ENCODE measurements at regions of chr18 and their contacts with region 1.

Region 1: DNA sequence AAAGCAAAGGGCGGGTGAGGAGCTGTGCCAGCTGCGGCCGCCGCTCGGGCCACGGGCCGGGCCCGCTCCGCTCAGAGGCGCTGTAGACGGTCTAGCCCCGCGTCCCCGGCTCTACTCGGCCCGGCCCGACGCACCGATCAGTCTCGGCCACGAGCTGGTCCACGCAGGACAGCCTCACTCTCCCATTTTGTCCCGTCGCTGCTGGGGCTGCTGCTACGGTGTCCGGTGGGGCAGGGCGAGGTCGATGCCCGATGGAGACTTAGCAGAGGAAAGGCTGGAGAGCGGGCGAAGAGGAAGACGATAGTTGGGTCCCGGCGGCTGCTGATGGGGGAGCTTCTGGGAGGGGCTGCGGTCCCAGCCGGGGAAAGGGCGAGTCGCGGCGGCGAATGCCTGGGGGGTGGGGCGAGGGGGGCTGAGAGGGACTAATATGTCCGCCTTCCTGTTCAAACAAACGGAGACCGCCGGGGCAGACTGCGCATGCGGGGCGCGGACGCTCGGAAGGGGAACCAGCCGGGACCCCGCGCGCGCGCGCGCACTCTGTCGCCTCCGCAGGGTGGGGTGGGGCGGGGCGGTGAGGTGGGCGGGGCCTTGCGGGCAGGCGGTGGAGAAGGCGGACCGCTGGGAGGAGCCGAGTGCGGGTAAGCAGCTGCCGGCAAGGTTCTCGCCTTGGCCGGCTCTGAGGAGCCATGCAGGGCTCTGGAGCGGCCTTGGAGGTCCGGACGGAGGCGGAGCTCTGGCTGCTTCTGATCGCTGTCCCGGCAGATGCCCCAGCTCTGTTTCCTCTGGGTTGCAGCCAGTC is at the start of gene ROCK1:
- DNase-seq: peak; percentile 95 to 99 (median 97)
- H3K4me3 ChIP-seq: peak within 1 kb of the TSS; percentile 90 to 96
- H3K4me3 Mint-ChIP-seq: peak within 1 kb of the TSS in 1 of 8 donors; percentile 97
- H3K27ac ChIP-seq: peak within 1 kb of the TSS; percentile 95
- H3K27ac Mint-ChIP-seq: peak within 1 kb of the TSS; percentile 88 to 96 (median 93)
- H3K4me1 ChIP-seq: peaks cover 41% of the 10 kb centered on the region
- H3K4me1 Mint-ChIP-seq: peaks cover 7 to 14% (median 11%) of the 10 kb centered on the region in 4 donors
- H3K27me3 ChIP-seq: no peaks in the 10 kb centered on the region
- H3K27me3 Mint-ChIP-seq: no peaks in the 10 kb centered on the region
- total RNA-seq, gene ROCK1: 80.7 to 82.8 TPM

Region 2: DNA sequence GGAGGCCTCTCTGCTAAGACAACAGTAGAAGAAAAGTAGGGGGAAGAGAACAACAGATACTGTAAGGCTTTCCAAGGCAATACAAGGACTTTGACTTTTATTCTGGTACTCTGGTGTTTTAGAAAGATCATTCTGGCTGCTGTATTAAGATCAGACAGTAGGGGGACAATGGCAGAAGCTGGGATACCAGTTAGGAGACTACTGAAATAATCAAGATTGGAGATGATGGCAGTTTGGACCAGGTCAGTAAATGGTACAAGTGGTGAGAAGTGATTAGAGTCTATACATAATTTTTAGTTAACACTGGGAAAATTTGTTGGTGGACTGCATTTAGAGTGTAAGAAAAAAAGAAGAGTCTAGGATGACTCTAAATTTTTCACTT is 139.7 kb before region 1 on chr18:
- CTCF ChIA-PET with region 1: interaction called, 3 read pairs
- POLR2A ChIA-PET with region 1: no interaction called
- intact Hi-C with region 1: loop called (anchors 5 kb)
- DNase-seq: peak in 3 of 5 donors; percentile 7 to 15 (median 14)
- H3K4me3 ChIP-seq: no peak overlapping the region
- H3K4me3 Mint-ChIP-seq: no peak overlapping the region
- H3K27ac ChIP-seq: no peak overlapping the region
- H3K27ac Mint-ChIP-seq: peak overlapping the region in 1 of 7 donors; percentile 19
- H3K4me1 ChIP-seq: no peaks in the 10 kb centered on the region
- H3K4me1 Mint-ChIP-seq: peaks cover 0 to 7% (median 2%) of the 10 kb centered on the region in 4 donors
- H3K27me3 ChIP-seq: no peaks in the 10 kb centered on the region
- H3K27me3 Mint-ChIP-seq: no peaks in the 10 kb centered on the region

Region 3: DNA sequence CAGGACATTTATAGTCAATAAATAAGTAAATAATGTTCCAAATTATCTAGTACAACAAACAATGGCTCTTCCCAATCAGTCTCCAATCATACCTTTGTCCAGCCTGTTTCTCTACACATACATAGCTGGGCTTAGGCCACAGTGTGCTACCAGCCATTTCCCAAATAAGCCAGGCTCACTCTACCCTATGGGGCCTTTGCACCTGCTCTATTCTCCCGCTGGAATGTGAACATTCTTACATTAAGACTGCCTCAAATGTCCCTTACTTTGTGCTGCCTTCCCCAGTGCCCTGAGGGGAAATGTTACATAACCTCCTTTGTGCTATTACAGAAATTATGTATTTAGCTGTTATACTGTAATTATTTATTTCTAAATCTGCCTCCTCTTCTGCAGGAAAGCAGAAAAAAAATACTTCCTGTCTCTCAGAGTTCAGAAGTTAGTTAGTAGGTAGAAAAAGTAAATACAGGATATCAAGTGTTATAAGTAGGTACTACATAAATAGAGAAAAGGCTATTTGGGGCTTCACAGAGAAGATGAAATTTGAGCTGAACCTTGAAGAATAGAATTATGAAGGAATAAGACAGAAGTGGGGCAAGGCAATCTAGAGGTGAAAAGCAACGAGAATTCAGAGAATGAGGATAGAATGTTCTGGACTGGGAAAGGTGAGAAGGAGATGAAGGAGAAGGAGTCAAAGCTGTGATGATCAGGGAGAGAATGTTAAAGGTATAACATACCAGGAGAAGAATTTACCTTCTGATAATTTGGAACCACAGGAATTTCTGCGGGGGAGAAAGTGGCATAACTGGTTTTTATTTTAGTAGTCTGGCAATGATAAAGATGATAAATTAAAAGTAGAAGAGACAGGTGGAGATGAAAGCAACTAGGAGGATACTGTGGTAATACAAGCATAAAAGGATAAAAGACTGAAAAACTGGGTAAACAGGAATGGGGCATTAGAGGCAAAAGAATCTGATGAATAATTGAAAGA is 36.9 kb before region 1 on chr18:
- CTCF ChIA-PET with region 1: no interaction called
- POLR2A ChIA-PET with region 1: interaction called, 8 read pairs
- intact Hi-C with region 1: loop called (anchors 2 kb)
- DNase-seq: peak in 1 of 5 donors; percentile 13
- H3K4me3 ChIP-seq: no peak overlapping the region
- H3K4me3 Mint-ChIP-seq: peak overlapping the region; percentile 39 to 82 (median 64)
- H3K27ac ChIP-seq: no peak overlapping the region
- H3K27ac Mint-ChIP-seq: peak overlapping the region; percentile 5 to 89 (median 62)
- H3K4me1 ChIP-seq: peaks cover 76% of the 10 kb centered on the region
- H3K4me1 Mint-ChIP-seq: peaks cover 58 to 81% (median 72%) of the 10 kb centered on the region in 4 donors
- H3K27me3 ChIP-seq: no peaks in the 10 kb centered on the region
- H3K27me3 Mint-ChIP-seq: no peaks in the 10 kb centered on the region

Region 4: GRCh38 chr18:21123290-21123926 is 11.9 kb after region 1 on chr18:
- CTCF ChIA-PET with region 1: no interaction called
- POLR2A ChIA-PET with region 1: interaction called, 12 read pairs
- intact Hi-C with region 1: no loop called
- DNase-seq: peak in 2 of 5 donors; percentile 7 to 10
- H3K4me3 ChIP-seq: no peak overlapping the region
- H3K4me3 Mint-ChIP-seq: peak overlapping the region in 6 of 8 donors; percentile 0 to 58 (median 32)
- H3K27ac ChIP-seq: no peak overlapping the region
- H3K27ac Mint-ChIP-seq: peak overlapping the region in 5 of 7 donors; percentile 19 to 48 (median 37)
- H3K4me1 ChIP-seq: peaks cover 6% of the 10 kb centered on the region
- H3K4me1 Mint-ChIP-seq: peaks cover 4 to 7% (median 6%) of the 10 kb centered on the region in 4 donors
- H3K27me3 ChIP-seq: no peaks in the 10 kb centered on the region
- H3K27me3 Mint-ChIP-seq: peaks cover under 1 to 2% of the 10 kb centered on the region in 2 donors

Region 5: DNA sequence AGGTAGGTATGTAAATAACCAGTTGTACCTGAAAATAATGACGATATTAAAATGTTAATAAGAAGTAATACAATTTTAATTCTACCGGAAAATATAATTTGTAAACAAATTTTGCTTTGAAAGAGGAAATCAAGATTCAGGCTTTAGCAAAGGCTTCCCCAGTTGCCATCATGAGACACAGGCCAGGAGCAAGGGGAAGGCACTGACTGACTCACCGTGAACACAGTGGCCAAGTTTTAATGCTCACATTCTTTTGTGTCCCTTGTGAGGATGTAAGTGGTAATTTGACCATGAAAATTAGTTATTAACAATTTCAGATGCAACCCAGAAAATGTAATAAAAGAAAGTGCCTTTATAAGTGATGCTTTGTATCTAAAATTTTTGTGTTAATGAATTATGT is 294.6 kb after region 1 on chr18:
- CTCF ChIA-PET with region 1: no interaction called
- POLR2A ChIA-PET with region 1: no interaction called
- intact Hi-C with region 1: no loop called
- DNase-seq: no peak
- H3K4me3 ChIP-seq: no peak overlapping the region
- H3K4me3 Mint-ChIP-seq: no peak overlapping the region
- H3K27ac ChIP-seq: no peak overlapping the region
- H3K27ac Mint-ChIP-seq: no peak overlapping the region
- H3K4me1 ChIP-seq: no peaks in the 10 kb centered on the region
- H3K4me1 Mint-ChIP-seq: no peaks in the 10 kb centered on the region
- H3K27me3 ChIP-seq: no peaks in the 10 kb centered on the region
- H3K27me3 Mint-ChIP-seq: peaks cover 0 to 4% of the 10 kb centered on the region in 2 donors

Region 6: GRCh38 chr18:21600526-21601410 is 489.2 kb after region 1 on chr18 and contains the start of gene ESCO1:
- CTCF ChIA-PET with region 1: no interaction called
- POLR2A ChIA-PET with region 1: interaction called, 18 read pairs
- intact Hi-C with region 1: loop called (anchors 1 kb)
- DNase-seq: peak; percentile 96 to 98 (median 98)
- H3K4me3 ChIP-seq: peak within 1 kb of the TSS; percentile 90 to 98
- H3K4me3 Mint-ChIP-seq: peak within 1 kb of the TSS; percentile 93 to 99 (median 96)
- H3K27ac ChIP-seq: peak within 1 kb of the TSS; percentile 93
- H3K27ac Mint-ChIP-seq: peak within 1 kb of the TSS; percentile 98 to 100 (median 99)
- H3K4me1 ChIP-seq: peaks cover 35% of the 10 kb centered on the region
- H3K4me1 Mint-ChIP-seq: peaks cover 23 to 62% (median 29%) of the 10 kb centered on the region in 4 donors
- H3K27me3 ChIP-seq: no peaks in the 10 kb centered on the region
- H3K27me3 Mint-ChIP-seq: no peaks in the 10 kb centered on the region
- total RNA-seq, gene ESCO1: 32.3 to 38.2 TPM

Region 7: GRCh38 chr18:21629089-21629832 is 517.7 kb after region 1 on chr18:
- CTCF ChIA-PET with region 1: no interaction called
- POLR2A ChIA-PET with region 1: no interaction called
- intact Hi-C with region 1: no loop called
- DNase-seq: no peak
- H3K4me3 ChIP-seq: no peak overlapping the region
- H3K4me3 Mint-ChIP-seq: peak overlapping the region in 6 of 8 donors; percentile 14 to 50 (median 42)
- H3K27ac ChIP-seq: no peak overlapping the region
- H3K27ac Mint-ChIP-seq: peak overlapping the region; percentile 53 to 94 (median 77)
- H3K4me1 ChIP-seq: peaks cover 16% of the 10 kb centered on the region
- H3K4me1 Mint-ChIP-seq: peaks cover 9 to 19% (median 15%) of the 10 kb centered on the region in 4 donors
- H3K27me3 ChIP-seq: no peaks in the 10 kb centered on the region
- H3K27me3 Mint-ChIP-seq: no peaks in the 10 kb centered on the region

Region 8: GRCh38 chr18:21740724-21741510 is 629.4 kb after region 1 on chr18 and contains the start of gene MIB1:
- CTCF ChIA-PET with region 1: no interaction called
- POLR2A ChIA-PET with region 1: no interaction called
- intact Hi-C with region 1: loop called (anchors 2 kb)
- DNase-seq: peak in 2 of 5 donors; percentile 98 to 99
- H3K4me3 ChIP-seq: peak within 1 kb of the TSS in 1 of 2 donors; percentile 100
- H3K4me3 Mint-ChIP-seq: peak within 1 kb of the TSS; percentile 94 to 98 (median 95)
- H3K27ac ChIP-seq: peak within 1 kb of the TSS; percentile 94
- H3K27ac Mint-ChIP-seq: peak within 1 kb of the TSS; percentile 91 to 98 (median 97)
- H3K4me1 ChIP-seq: peaks cover 48% of the 10 kb centered on the region
- H3K4me1 Mint-ChIP-seq: peaks cover 29 to 70% (median 47%) of the 10 kb centered on the region in 4 donors
- H3K27me3 ChIP-seq: no peaks in the 10 kb centered on the region
- H3K27me3 Mint-ChIP-seq: no peaks in the 10 kb centered on the region
- total RNA-seq, gene MIB1: 37.6 to 39.0 TPM

Measured in CD4-positive, alpha-beta memory T cell (primary cell).